Gastrocnemius medialis (tissue), 4 donors: ENCODE measurements at regions of chr3 and their contacts with region 1.

Region 1: GRCh38 chr3:172201136-172201869 is 161.9 kb downstream of the FNDC3B start:
- DNase-seq: peak; percentile 31 to 67
- ATAC-seq: peak; percentile 50 to 76
- H3K4me3 ChIP-seq: peak overlapping the region in 1 of 4 donors; percentile 15
- H3K27ac ChIP-seq: peak overlapping the region; percentile 20 to 70 (median 61)
- H3K4me1 ChIP-seq: peaks cover 38 to 47% of the 10 kb centered on the region in 2 donors
- H3K27me3 ChIP-seq: no peaks in the 10 kb centered on the region
- CTCF ChIP-seq: no peak
- POLR2A ChIP-seq: no peak

Region 2: DNA sequence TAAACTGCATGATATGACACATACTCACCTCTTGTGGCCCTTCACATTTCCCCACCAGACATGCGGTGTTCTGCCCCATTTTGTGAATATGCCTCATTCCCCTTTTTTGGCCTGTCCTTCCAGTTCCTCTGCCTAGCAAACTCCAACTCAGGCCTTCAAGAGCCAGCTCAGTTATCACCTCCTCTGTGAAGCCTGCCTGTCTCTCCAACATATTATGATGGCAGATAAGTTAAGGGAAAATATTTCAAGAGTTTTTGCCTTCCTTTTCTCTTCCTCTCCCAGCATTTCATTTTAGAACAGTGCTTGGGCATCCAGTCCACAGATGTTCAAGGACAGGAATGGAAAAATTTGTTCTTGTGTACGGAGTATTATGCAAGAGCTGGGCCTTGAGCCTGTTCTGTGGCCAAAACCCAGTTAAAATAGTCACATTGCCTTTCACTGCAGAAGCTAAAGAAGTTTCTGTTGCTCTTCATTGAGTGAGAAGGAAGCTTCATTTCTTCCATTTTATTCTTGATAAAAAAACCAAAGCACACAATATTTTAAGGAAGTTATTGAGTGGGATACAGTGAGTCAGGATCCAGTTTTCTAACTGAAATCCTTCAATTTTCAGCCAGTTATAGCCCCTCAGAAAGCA is 54.9 kb after region 1 on chr3:
- in situ Hi-C with region 1: no loop called
- intact Hi-C with region 1: loop called (anchors 5 kb)
- DNase-seq: peak; percentile 56 to 70
- ATAC-seq: peak; percentile 93
- H3K4me3 ChIP-seq: peak overlapping the region in 1 of 4 donors; percentile 10
- H3K27ac ChIP-seq: peak overlapping the region; percentile 70 to 84 (median 76)
- H3K4me1 ChIP-seq: peaks cover 52 to 65% of the 10 kb centered on the region in 2 donors
- H3K27me3 ChIP-seq: no peaks in the 10 kb centered on the region
- CTCF ChIP-seq: no peak
- POLR2A ChIP-seq: no peak

Region 3: DNA sequence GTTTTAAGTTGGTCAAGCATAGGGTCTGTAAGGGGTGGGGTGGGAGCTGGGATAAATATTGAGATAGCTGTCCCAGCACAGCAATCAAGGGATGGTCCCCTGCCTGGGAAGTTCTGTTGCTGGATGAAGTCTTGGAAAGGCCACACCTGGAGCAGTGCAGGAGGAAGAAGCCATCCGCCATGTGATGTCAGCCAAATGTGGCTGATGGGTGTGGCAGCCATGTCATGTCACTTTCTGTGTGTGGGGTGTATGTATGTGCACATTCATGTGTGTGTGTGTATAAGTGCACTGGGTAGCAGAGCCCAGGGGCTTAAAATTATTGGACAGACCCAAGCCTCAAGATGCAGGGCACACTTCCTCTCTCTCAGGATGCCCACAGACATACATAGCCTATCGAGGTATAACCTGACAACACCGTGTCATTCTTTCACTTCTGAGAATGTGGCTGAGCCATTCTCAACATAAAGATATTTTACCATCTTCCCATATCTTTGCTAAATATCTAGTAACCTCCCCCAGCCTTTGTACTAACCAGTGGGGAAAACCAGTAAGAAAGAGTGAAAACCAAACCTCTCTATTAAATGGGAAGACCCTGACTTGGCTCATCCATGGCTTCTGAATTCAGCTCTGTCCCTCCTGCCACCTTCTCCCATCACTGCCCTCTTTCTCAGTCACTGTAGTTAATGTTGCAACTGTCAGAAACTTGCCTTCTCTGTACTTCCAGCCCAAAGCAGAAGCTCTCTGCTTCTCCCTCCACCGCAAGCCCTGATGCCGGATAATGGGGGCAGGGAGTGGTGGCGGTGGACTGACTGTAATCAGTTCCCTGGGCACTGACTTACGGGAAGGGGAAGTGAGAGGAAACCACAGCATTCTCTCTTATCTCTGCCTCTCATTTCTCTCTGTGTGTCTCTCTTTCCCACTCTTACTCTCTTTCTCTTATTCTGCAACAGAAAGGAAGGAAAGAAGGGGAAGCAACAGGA is 310.8 kb after region 1 on chr3:
- in situ Hi-C with region 1: no loop called
- intact Hi-C with region 1: no loop called
- DNase-seq: peak; percentile 31 to 45
- ATAC-seq: no peak
- H3K4me3 ChIP-seq: no peak overlapping the region
- H3K27ac ChIP-seq: peak overlapping the region in 2 of 4 donors; percentile 20 to 58
- H3K4me1 ChIP-seq: peaks cover 28 to 40% of the 10 kb centered on the region in 2 donors
- H3K27me3 ChIP-seq: no peaks in the 10 kb centered on the region
- CTCF ChIP-seq: no peak
- POLR2A ChIP-seq: no peak